ENCODE measurements at regions of chr4 and their contacts with region 1.

Region 1: GRCh38 chr4:54233277-54233696 is 4.2 kb downstream of the PDGFRA start:
- DNase-seq: peak; percentile 93
- ATAC-seq: peak; percentile 84
- H3K4me3 ChIP-seq: peak overlapping the region; percentile 67
- H3K27ac ChIP-seq: no peak overlapping the region
- H3K4me1 ChIP-seq: peaks cover 29% of the 10 kb centered on the region
- H3K27me3 ChIP-seq: peaks cover 38% of the 10 kb centered on the region
- CTCF ChIP-seq: peak; percentile 74

Region 2: DNA sequence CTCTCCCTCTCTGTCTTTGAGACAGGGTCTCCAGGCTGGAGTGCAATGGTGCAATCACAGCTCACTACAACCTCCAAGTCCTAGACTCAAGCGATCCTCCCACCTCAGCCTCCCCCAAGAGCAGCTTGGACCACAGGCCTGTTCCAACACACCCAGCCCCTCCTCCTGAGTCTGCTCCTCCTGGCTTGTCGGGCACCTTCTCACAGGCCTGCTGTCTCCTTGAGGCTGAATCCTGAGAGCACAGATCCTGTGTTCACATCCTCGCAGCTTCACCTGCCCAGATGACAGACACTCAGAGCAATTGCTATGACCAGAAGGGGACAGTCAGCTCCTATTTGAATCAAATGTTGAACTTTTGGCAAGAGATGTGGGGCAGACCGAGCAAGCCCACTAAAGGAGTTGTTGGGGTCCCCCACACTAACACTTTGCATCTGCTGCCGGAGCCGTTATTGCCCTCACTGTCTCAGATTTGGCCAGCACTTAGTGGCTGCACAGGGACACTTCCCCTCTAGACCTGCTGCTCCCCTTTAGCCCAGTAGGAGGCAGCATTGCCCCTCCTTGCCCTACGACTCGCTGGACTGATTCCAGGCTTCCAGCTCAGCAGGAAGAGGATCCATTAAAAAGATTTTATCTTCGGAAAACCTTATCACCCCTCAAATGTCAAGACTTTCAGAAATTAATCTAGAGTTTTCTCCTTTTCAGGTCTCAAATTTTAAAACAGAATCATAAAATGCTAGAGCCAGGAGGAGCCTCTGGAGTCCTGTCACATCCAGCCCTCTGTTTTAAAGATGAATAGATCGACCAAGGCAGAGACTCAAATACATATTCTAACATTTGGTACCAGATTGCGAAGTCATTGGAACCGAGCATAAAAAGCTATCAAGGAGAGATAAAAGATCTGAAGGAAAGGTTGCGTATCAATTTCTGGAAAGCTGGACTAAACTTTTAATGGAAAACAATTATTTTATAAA is 1687.9 kb before region 1 on chr4:
- CTCF ChIA-PET with region 1: no interaction called
- POLR2A ChIA-PET with region 1: no interaction called
- intact Hi-C with region 1: loop called (anchors 2 kb)
- DNase-seq: peak; percentile 90
- ATAC-seq: peak; percentile 89
- H3K4me3 ChIP-seq: peak overlapping the region; percentile 38; the same call in 1 of the 2 replicates
- H3K27ac ChIP-seq: no peak overlapping the region
- H3K4me1 ChIP-seq: peaks cover 3% of the 10 kb centered on the region; the same call in 1 of the 2 replicates
- H3K27me3 ChIP-seq: peaks cover 11% of the 10 kb centered on the region; the same call in 1 of the 2 replicates
- CTCF ChIP-seq: peak; percentile 98

Region 3: GRCh38 chr4:52983563-52984303 is 1249.6 kb before region 1 on chr4:
- CTCF ChIA-PET with region 1: interaction called, 5 read pairs
- POLR2A ChIA-PET with region 1: no interaction called
- intact Hi-C with region 1: loop called (anchors 1 kb)
- DNase-seq: peak; percentile 83
- ATAC-seq: peak; percentile 80
- H3K4me3 ChIP-seq: no peak overlapping the region
- H3K27ac ChIP-seq: no peak overlapping the region
- H3K4me1 ChIP-seq: peaks cover 12% of the 10 kb centered on the region
- H3K27me3 ChIP-seq: no peaks in the 10 kb centered on the region
- CTCF ChIP-seq: peak; percentile 90

Region 4: GRCh38 chr4:53313510-53313909 is 919.8 kb before region 1 on chr4:
- CTCF ChIA-PET with region 1: interaction called, 7 read pairs
- POLR2A ChIA-PET with region 1: no interaction called
- intact Hi-C with region 1: loop called (anchors 1 kb)
- DNase-seq: peak; percentile 53
- ATAC-seq: peak; percentile 85
- H3K4me3 ChIP-seq: no peak overlapping the region
- H3K27ac ChIP-seq: no peak overlapping the region
- H3K4me1 ChIP-seq: no peaks in the 10 kb centered on the region
- H3K27me3 ChIP-seq: no peaks in the 10 kb centered on the region
- CTCF ChIP-seq: peak; percentile 57

Region 5: GRCh38 chr4:53490965-53491622 is 742.2 kb before region 1 on chr4:
- CTCF ChIA-PET with region 1: no interaction called
- POLR2A ChIA-PET with region 1: no interaction called
- intact Hi-C with region 1: loop called (anchors 5 kb)
- DNase-seq: peak; percentile 87
- ATAC-seq: peak; percentile 64
- H3K4me3 ChIP-seq: no peak overlapping the region
- H3K27ac ChIP-seq: no peak overlapping the region
- H3K4me1 ChIP-seq: peaks cover 9% of the 10 kb centered on the region
- H3K27me3 ChIP-seq: no peaks in the 10 kb centered on the region
- CTCF ChIP-seq: peak; percentile 91

Region 6: DNA sequence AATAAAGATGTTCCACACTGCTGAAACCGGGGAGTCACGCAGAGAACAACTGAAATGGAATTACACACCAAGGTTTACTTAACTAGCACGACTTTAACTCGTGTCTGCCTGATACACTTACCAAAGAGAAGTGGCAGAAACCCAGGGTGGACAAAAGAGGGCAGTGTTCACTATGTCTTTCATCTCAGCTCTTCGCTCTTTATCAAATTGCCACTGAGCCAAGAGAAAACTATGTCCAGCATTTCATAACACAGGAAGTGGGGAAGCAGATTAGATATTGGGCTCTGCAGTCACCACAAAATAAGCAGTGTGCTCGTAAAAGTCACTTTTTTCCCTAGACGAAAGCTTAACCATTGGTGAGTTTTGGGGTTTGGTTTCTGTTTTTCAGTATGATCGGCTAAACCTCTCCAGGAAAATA is 324.6 kb before region 1 on chr4:
- CTCF ChIA-PET with region 1: interaction called, 28 read pairs
- POLR2A ChIA-PET with region 1: no interaction called
- intact Hi-C with region 1: loop called (anchors 1 kb)
- DNase-seq: peak; percentile 95
- ATAC-seq: peak; percentile 85
- H3K4me3 ChIP-seq: peak overlapping the region; percentile 55
- H3K27ac ChIP-seq: peak overlapping the region; percentile 27
- H3K4me1 ChIP-seq: peaks cover 25% of the 10 kb centered on the region
- H3K27me3 ChIP-seq: no peaks in the 10 kb centered on the region
- CTCF ChIP-seq: peak; percentile 97

Region 7: GRCh38 chr4:54118850-54119589 is 114.3 kb before region 1 on chr4:
- CTCF ChIA-PET with region 1: no interaction called
- POLR2A ChIA-PET with region 1: no interaction called
- intact Hi-C with region 1: no loop called
- DNase-seq: no peak
- ATAC-seq: no peak
- H3K4me3 ChIP-seq: no peak overlapping the region
- H3K27ac ChIP-seq: no peak overlapping the region
- H3K4me1 ChIP-seq: no peaks in the 10 kb centered on the region
- H3K27me3 ChIP-seq: no peaks in the 10 kb centered on the region
- CTCF ChIP-seq: no peak

Region 8: DNA sequence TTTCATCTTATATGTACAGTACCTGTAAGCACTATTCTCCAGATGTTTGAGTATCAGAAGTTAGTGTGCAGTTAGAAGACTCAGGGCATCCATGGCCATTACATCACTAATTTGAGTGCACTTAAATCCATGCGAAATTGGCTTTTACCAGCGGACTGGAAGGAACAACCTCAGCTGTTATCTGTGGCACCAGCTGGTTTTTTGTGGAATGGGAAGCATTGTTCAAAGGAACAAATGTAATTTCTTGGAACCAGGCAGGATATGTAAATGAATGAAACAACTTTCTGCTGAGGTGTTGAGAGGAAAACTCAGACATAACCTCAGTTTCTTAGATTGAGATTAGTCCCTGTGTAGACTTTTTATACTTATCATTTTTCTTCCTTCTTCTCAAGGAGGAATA is 56.0 kb after region 1 on chr4:
- CTCF ChIA-PET with region 1: no interaction called
- POLR2A ChIA-PET with region 1: no interaction called
- intact Hi-C with region 1: no loop called
- DNase-seq: no peak
- ATAC-seq: no peak
- H3K4me3 ChIP-seq: no peak overlapping the region
- H3K27ac ChIP-seq: no peak overlapping the region
- H3K4me1 ChIP-seq: no peaks in the 10 kb centered on the region
- H3K27me3 ChIP-seq: peaks cover 40% of the 10 kb centered on the region
- CTCF ChIP-seq: no peak

Region 9: GRCh38 chr4:54657551-54658251 is 424.4 kb after region 1 on chr4 and contains the start of gene KIT:
- CTCF ChIA-PET with region 1: interaction called, 11 read pairs
- POLR2A ChIA-PET with region 1: no interaction called
- intact Hi-C with region 1: no loop called
- DNase-seq: no peak
- ATAC-seq: no peak
- H3K4me3 ChIP-seq: peak within 1 kb of the TSS; percentile 60
- H3K27ac ChIP-seq: no peak within 1 kb of the TSS
- H3K4me1 ChIP-seq: peaks cover 11% of the 10 kb centered on the region
- H3K27me3 ChIP-seq: peaks cover 59% of the 10 kb centered on the region
- CTCF ChIP-seq: no peak
- total RNA-seq, gene KIT: not detected in 2 replicates